ENCODE measurements at regions of chr7 and their contacts with region 1.

Region 1: DNA sequence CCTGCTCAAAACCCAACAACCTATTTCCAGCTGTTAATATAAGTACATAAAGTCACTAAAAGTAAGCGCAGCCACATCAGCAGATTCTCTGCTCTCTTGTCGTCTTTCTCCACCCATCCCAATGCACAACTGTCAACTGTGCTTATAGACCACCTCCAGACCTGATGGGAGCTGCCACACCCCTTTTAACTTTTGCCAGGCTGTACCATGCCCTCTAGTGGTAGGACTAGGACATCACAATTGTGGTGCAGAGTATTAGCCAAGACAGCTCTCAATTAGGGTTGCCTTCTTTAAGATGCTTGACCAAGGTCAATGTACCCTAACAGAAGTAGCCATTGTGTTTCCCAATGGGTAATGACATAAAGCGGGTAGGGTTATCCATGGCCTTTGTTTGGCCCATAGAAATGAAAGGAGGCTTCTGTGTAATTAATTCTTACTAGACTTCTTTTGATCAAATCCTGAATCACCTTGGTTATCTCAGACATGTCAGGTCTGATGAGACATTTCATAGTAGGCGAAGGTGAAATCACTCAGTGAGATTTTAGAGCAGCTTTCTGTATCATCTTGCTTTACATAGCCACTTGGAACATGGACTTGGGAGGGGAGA is 68.1 kb downstream of the SCRN1 start:
- DNase-seq: no peak
- ATAC-seq: peak; percentile 75
- H3K4me3 ChIP-seq: no peak overlapping the region
- H3K27ac ChIP-seq: no peak overlapping the region
- H3K4me1 ChIP-seq: no peaks in the 10 kb centered on the region
- H3K27me3 ChIP-seq: no peaks in the 10 kb centered on the region

Region 2: DNA sequence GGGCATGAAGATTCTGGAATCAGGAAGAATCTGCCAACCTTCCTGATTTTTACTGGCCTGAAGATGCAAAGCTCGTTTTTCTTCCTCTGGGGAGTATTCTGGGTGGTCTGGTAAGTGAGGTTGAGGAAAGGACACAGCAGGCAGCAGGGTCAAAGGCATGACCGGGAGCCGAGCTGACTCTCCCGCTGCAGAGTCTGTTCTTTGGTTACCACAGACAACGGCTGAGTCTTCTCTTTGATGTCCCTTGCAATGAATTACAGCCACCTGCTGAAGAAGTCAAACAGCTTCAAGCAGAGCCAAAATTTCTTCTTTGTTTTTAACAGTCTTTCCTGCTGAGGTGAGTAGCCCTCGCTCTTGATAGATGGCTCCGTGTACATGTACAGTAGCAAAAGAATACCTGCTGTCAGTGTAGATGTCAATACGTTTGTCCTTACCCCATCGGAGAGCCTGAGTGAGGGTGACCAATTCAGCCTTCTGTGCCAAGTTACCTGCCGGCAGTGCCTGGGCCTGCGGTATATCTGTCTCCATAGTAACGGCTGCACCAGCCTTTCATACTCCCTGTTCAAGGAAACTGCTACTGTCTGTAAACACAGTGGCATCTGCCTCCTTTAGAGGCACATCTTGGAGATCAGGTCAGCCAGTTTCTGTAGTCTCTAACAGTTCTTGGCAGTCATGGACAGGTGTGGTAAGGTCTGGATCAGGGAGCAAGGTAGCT is 281.5 kb before region 1 on chr7:
- intact Hi-C with region 1: loop called (anchors 5 to 10 kb)
- DNase-seq: no peak
- ATAC-seq: no peak
- H3K4me3 ChIP-seq: no peak overlapping the region
- H3K27ac ChIP-seq: no peak overlapping the region
- H3K4me1 ChIP-seq: no peaks in the 10 kb centered on the region
- H3K27me3 ChIP-seq: no peaks in the 10 kb centered on the region

Region 3: GRCh38 chr7:29748286-29749108 is 173.0 kb before region 1 on chr7:
- intact Hi-C with region 1: loop called (anchors 2 to 5 kb)
- DNase-seq: no peak
- ATAC-seq: peak; percentile 82
- H3K4me3 ChIP-seq: no peak overlapping the region
- H3K27ac ChIP-seq: no peak overlapping the region
- H3K4me1 ChIP-seq: no peaks in the 10 kb centered on the region
- H3K27me3 ChIP-seq: no peaks in the 10 kb centered on the region

Region 4: GRCh38 chr7:29866490-29866930 is 55.0 kb before region 1 on chr7:
- intact Hi-C with region 1: no loop called
- DNase-seq: peak; percentile 81 to 84
- ATAC-seq: peak; percentile 63
- H3K4me3 ChIP-seq: no peak overlapping the region
- H3K27ac ChIP-seq: peak overlapping the region in 1 of 2 donors; percentile 59
- H3K4me1 ChIP-seq: peaks cover 0 to 4% of the 10 kb centered on the region in 2 donors
- H3K27me3 ChIP-seq: no peaks in the 10 kb centered on the region

Region 5: DNA sequence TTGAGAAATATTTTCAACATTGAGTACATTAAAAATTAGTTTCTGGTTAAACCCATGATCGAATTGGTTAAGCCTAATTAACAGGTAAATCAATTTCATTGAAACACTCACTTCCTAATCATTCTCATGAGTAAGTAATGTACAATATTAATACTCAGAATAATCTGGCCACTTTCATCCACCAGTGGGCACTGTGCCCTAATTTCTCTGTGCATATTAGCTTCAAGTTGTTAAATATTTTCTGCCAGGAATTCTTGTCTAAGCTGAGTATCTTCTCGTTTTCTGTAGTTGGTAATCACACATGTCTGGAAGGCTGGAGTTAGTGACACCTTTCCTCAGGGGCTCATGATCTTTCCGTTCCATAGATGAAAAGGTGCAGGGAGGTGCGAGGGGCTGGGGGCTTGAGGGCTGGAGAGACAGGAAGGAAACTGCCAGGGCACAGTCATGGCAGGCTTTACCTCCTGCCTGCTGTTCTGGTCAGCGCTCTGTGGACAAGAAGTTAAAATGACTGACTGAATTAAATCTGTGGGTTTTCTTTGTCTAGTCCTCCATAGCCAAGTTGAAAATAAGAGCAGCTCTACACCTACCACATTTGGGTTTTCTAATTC is 43.3 kb before region 1 on chr7:
- intact Hi-C with region 1: loop called (anchors 2 to 5 kb)
- DNase-seq: no peak
- ATAC-seq: no peak
- H3K4me3 ChIP-seq: no peak overlapping the region
- H3K27ac ChIP-seq: no peak overlapping the region
- H3K4me1 ChIP-seq: no peaks in the 10 kb centered on the region
- H3K27me3 ChIP-seq: no peaks in the 10 kb centered on the region

Region 6: DNA sequence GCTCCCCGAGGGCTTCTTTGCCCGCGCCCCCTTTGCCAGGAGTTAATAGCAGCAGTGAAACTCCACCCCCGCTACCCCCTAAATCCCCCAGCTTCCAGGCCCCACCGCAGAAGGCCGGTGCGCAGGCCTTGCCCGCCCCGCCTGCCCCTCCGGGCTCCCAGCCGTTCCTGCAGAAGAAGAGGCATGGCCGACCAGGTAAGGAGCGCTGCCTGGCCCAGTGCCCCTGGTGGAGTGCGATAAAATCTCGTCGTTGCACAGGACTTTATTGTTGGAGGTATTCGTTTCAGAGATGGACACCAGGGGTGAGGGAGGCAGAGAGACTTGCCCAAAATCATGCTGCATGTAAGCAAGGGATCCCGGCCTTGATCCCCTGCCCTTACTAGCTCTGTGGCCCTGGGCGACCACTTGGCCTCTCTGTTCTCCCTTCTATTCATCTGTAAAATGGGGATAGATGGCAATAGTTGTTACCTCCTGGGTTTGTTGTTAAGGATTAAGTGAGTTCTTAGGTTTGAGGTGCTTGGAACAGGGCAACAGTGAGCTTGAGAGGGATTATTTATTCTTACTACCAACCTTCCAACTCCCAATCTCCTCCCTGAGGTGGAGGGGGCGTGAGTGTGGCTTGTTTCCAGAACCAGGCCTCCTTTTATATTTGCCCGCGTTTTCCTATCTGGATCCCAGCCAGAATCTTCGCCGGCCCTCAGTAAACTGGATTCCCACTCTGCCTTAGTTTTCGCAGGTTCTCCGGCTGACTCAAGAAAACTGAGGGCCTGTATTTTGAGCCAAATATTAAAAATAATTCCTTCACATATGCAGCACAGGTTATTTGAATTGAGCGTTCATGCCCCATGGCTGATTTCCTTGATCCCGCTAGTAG is 36.9 kb before region 1 on chr7:
- intact Hi-C with region 1: loop called (anchors 2 to 5 kb)
- DNase-seq: no peak
- ATAC-seq: no peak
- H3K4me3 ChIP-seq: peak overlapping the region; percentile 37 to 49
- H3K27ac ChIP-seq: no peak overlapping the region
- H3K4me1 ChIP-seq: no peaks in the 10 kb centered on the region
- H3K27me3 ChIP-seq: no peaks in the 10 kb centered on the region

Measured in aorta (tissue), 5 donors.